Heart right ventricle (tissue), 16 donors: ENCODE measurements at regions of chr3 and their contacts with region 1.

Region 1: DNA sequence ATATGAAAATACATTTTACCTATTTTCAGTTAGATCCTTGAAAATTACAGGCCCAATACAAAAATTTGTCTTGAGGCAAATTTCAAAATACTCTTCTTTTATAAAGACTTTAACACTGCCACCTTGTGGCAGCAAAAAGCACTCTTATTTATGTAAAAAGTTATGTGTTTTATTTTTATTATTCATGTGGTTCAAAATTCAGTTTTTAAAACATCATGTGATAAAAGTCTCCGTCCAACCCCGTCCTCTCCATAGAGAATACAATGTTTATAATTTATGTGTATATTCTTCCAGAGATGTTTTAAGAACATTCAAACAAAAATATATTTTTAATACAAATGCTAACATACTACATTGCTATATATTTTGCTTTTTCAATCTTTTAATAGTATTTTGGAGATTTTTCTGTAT is 36.9 kb upstream of the TRIM59 start:
- DNase-seq: no peak
- ATAC-seq: no peak
- H3K4me3 ChIP-seq: no peak overlapping the region
- H3K27ac ChIP-seq: no peak overlapping the region
- H3K4me1 ChIP-seq: peaks cover 0 to 4% (median 0%) of the 10 kb centered on the region in 9 donors
- H3K27me3 ChIP-seq: peaks cover 0 to 3% (median 0%) of the 10 kb centered on the region in 7 donors
- CTCF ChIP-seq: peak; percentile 21 to 77 (median 63)

Region 2: DNA sequence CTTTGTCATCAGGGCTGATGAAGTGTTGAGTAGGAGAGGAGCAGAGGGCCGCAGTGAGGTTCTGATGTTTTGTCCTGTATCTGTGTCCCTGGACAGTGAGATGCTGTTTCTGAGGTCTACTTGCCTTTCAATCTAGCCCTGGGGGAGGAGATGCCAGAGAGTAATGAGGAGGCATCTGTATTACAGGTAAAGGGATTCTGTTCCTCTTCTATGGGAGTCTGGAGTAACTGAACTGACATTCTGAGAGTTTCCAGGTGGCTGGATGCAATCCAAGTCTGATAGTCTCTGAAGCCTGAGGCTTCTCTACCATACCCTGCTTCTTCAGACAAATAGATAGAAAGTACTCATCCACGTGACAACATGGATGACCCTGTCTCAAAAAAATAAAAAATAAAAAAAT is 436.9 kb before region 1 on chr3:
- intact Hi-C with region 1: loop called in 1 of 10 experiments (anchors 10 kb)
- DNase-seq: no peak
- ATAC-seq: no peak
- H3K4me3 ChIP-seq: no peak overlapping the region
- H3K27ac ChIP-seq: no peak overlapping the region
- H3K4me1 ChIP-seq: peaks cover 0 to 6% (median 0%) of the 10 kb centered on the region in 9 donors
- H3K27me3 ChIP-seq: no peaks in the 10 kb centered on the region
- CTCF ChIP-seq: no peak

Region 3: DNA sequence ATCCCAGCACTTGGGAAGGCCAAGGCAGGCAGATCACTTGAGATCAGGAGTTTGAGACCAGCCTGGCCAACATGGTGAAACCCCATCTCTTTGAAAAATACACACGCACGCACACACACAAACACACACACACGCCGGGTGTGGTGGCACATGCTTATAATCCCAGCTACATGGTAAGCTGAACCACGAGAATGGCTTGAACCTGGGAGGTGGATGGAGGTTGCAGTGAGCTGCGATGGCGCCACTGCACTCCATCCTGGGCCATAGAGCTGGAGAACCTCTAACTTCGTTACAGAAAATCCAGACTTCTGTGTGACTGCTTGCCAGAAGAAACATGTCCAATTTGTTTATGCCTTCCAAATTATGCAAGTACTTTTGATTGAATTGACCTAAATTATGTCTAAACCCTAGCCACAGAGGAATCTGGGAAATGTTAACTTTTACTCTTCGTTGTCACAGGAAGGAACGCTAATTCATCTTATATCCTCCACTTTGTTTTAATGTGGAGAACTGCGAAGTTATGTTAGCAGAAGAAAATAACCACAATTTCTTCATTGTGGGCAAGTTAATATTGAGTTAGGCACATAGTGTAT is 58.5 kb before region 1 on chr3:
- intact Hi-C with region 1: no loop called
- DNase-seq: no peak
- ATAC-seq: no peak
- H3K4me3 ChIP-seq: no peak overlapping the region
- H3K27ac ChIP-seq: no peak overlapping the region
- H3K4me1 ChIP-seq: no peaks in the 10 kb centered on the region
- H3K27me3 ChIP-seq: no peaks in the 10 kb centered on the region
- CTCF ChIP-seq: no peak

Region 4: GRCh38 chr3:160449636-160450598 is 36.5 kb before region 1 on chr3 and contains the start of gene TRIM59:
- intact Hi-C with region 1: no loop called
- DNase-seq: peak; percentile 57 to 78
- ATAC-seq: peak; percentile 77 to 94 (median 90)
- H3K4me3 ChIP-seq: peak within 1 kb of the TSS; percentile 23 to 68 (median 49)
- H3K27ac ChIP-seq: peak within 1 kb of the TSS in 1 of 10 donors; percentile 84
- H3K4me1 ChIP-seq: peaks cover 0 to 31% (median 15%) of the 10 kb centered on the region in 9 donors
- H3K27me3 ChIP-seq: peaks cover 0 to 30% (median 16%) of the 10 kb centered on the region in 7 donors
- CTCF ChIP-seq: no peak
- total RNA-seq, gene TRIM59: 0.10 to 2.8 (median 0.60) TPM in 9 of 10 donors, not detected in the other

Region 5: GRCh38 chr3:160540551-160540950 is 54.1 kb after region 1 on chr3:
- intact Hi-C with region 1: no loop called
- DNase-seq: no peak
- ATAC-seq: no peak
- H3K4me3 ChIP-seq: no peak overlapping the region
- H3K27ac ChIP-seq: no peak overlapping the region
- H3K4me1 ChIP-seq: peaks cover 0 to 82% (median 34%) of the 10 kb centered on the region in 9 donors
- H3K27me3 ChIP-seq: no peaks in the 10 kb centered on the region
- CTCF ChIP-seq: no peak

Region 6: DNA sequence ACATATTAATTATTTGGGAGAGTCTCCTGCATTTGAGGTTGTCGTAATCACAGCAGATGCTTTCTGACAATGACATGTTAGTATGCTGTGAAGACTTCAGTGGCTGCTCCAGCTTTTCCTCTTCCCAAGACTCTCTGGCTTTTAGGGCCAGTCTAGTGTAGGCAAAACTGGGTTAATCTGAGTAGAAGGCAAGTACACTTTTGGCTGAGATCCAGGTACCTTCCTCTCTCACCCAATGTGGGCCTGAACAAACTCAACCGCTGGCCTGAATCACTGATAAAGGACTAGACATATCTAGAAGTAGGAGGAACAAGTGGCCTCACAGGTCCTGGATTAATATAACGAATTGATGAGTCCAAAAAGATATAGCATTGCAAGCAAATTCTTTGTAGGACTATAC is 881.2 kb after region 1 on chr3:
- intact Hi-C with region 1: no loop called
- DNase-seq: no peak
- ATAC-seq: no peak
- H3K4me3 ChIP-seq: no peak overlapping the region
- H3K27ac ChIP-seq: no peak overlapping the region
- H3K4me1 ChIP-seq: peaks cover 0 to 16% (median 12%) of the 10 kb centered on the region in 9 donors
- H3K27me3 ChIP-seq: peaks cover 0 to 34% (median 22%) of the 10 kb centered on the region in 7 donors
- CTCF ChIP-seq: no peak